ENCODE measurements at regions of chr10 and their contacts with region 1.

Region 1: DNA sequence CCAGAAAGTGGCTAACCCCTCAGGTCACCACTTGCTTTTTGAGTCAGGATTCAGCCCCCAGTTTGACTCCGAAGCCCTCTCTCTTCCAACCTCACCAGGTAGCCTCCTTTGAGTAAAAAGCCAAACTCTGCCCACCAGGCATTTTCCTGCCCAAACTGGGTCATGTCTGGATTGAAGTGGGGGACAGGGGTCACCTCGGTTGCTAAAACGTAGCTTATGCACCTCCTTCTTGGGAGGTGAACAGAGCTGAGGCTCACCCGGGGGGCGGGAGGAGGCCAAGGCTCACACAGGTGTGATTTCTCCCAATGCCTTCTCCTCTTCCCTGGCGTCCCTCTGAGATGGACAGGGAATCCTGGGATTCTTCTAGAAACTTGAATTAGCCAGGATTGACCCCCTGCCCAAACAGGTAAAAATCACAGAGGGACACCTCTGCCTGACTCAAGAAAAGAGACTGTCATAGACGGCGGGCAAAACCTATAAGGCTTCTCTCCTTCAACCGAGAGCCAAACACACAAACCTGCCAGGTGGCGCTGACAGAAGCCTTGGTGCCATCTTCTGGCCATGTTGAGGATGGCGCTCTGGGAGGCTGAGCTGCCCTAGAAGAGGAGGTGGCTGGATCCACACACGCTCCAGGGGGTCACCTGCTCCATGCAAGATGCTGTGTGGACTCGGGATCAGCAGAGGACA is 51.6 kb downstream of the PRLHR start:
- DNase-seq: peak; percentile 58
- H3K4me3 ChIP-seq: no peak overlapping the region
- H3K27ac ChIP-seq: no peak overlapping the region
- H3K4me1 ChIP-seq: peaks cover 4% of the 10 kb centered on the region
- H3K27me3 ChIP-seq: no peaks in the 10 kb centered on the region
- CTCF ChIP-seq: peak; percentile 93 to 97

Region 2: DNA sequence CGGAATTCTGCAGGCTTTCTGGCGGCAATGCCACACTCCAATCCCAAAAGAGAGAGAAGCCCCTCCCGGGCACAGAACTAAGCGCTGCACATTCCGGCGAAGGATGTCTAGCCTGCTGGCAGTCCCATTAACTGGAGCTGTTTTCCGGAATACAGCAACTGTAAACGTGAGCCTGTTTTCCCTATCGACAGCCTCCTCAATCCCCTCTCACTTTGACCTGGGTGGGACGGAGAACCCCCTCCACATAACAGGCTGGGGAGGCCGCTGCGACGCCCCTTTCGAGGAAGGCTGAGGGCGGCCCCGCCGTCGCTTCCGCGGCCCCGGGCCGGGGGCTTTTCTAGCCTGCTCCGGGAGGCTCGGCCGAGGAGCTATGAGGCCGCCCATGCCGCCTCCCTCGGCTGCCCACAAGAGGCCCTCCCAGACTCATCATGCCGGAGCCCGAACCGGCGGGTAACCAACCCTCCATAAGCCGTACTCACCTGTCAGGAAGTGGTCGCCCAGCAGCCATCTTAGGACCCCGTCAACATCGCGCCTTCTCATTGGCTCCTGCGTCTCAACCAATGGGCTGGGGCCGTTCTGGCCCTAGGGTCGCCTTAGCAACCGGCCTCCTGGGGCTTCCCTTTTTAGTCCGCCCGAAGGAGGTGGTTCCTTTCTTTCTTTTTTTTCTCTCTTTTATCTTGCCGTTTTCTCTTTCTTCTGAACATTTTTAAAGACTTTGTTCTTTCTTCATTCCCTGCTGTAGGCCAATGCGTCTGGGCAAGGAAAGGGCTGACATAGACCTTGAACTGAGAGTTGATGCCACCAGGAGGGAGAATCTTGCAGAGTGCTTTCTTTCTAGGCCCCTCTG is 201.8 kb before region 1 on chr10 and contains the start of gene FAM204A:
- CTCF ChIA-PET with region 1: no interaction called
- dilution Hi-C with region 1: no loop called
- in situ Hi-C with region 1: loop called in 1 of 2 experiments (anchors 25 kb)
- intact Hi-C with region 1: loop called (anchors 1 kb)
- DNase-seq: peak; percentile 91
- H3K4me3 ChIP-seq: peak within 1 kb of the TSS; percentile 62 to 87 (median 83)
- H3K27ac ChIP-seq: peak within 1 kb of the TSS; percentile 75
- H3K4me1 ChIP-seq: peaks cover 10% of the 10 kb centered on the region
- H3K27me3 ChIP-seq: no peaks in the 10 kb centered on the region
- CTCF ChIP-seq: no peak
- total RNA-seq, gene FAM204A: 50.3 to 73.2 TPM

Region 3: DNA sequence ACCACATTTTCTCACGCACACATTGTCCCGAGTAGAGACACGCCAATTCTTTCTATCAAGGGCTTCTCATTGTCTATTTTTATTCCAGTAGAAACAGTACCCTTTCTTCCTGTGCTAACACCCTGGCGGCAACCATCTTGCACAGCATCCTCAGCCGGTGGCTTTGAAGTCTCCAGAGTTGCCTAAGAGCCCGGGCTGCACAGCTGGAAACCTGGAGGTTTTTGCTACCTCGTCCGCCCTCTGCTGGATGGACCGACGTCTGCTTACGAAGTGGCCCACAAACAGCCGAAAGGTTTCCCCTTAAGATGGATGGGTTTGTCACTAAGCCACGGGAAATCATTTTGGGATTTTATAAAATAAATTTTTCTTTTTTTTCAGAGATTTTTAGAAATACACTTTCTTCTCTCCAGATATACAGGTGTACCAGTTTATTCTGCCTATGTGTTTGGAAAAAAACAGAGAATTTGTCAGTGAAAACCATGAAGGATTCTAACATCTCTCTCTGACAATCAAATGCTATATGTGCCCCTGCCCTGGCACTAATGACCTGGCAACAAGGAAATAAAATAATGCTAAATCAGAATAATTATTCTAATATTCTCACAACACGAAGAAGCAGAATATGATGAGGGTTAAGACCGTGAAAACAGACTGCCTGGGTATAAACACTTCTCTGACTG is 119.9 kb before region 1 on chr10:
- CTCF ChIA-PET with region 1: no interaction called
- dilution Hi-C with region 1: no loop called
- in situ Hi-C with region 1: no loop called
- intact Hi-C with region 1: loop called (anchors 1 kb)
- DNase-seq: peak; percentile 79
- H3K4me3 ChIP-seq: no peak overlapping the region
- H3K27ac ChIP-seq: no peak overlapping the region
- H3K4me1 ChIP-seq: no peaks in the 10 kb centered on the region
- H3K27me3 ChIP-seq: peaks cover 2% of the 10 kb centered on the region
- CTCF ChIP-seq: peak; percentile 75 to 89

Region 4: GRCh38 chr10:118459726-118460193 is 84.1 kb before region 1 on chr10:
- CTCF ChIA-PET with region 1: no interaction called
- dilution Hi-C with region 1: no loop called
- in situ Hi-C with region 1: loop called in 1 of 2 experiments (anchors 10 kb)
- intact Hi-C with region 1: loop called (anchors 1 kb)
- DNase-seq: peak; percentile 52
- H3K4me3 ChIP-seq: no peak overlapping the region
- H3K27ac ChIP-seq: no peak overlapping the region
- H3K4me1 ChIP-seq: no peaks in the 10 kb centered on the region
- H3K27me3 ChIP-seq: no peaks in the 10 kb centered on the region
- CTCF ChIP-seq: peak; percentile 67 to 84

Region 5: GRCh38 chr10:118471863-118472262 is 72.0 kb before region 1 on chr10:
- CTCF ChIA-PET with region 1: no interaction called
- dilution Hi-C with region 1: no loop called
- in situ Hi-C with region 1: loop called (anchors 5 to 10 kb)
- intact Hi-C with region 1: no loop called
- DNase-seq: peak; percentile 88
- H3K4me3 ChIP-seq: no peak overlapping the region
- H3K27ac ChIP-seq: peak overlapping the region; percentile 92
- H3K4me1 ChIP-seq: peaks cover 25% of the 10 kb centered on the region
- H3K27me3 ChIP-seq: no peaks in the 10 kb centered on the region
- CTCF ChIP-seq: no peak

Region 6: GRCh38 chr10:118504044-118504874 is 39.6 kb before region 1 on chr10:
- CTCF ChIA-PET with region 1: no interaction called
- dilution Hi-C with region 1: no loop called
- in situ Hi-C with region 1: no loop called
- intact Hi-C with region 1: loop called (anchors 1 kb)
- DNase-seq: peak; percentile 91
- H3K4me3 ChIP-seq: no peak overlapping the region
- H3K27ac ChIP-seq: peak overlapping the region; percentile 87
- H3K4me1 ChIP-seq: peaks cover 41% of the 10 kb centered on the region
- H3K27me3 ChIP-seq: no peaks in the 10 kb centered on the region
- CTCF ChIP-seq: no peak

Region 7: GRCh38 chr10:118522791-118523498 is 20.9 kb before region 1 on chr10:
- CTCF ChIA-PET with region 1: no interaction called
- dilution Hi-C with region 1: no loop called
- in situ Hi-C with region 1: no loop called
- intact Hi-C with region 1: loop called (anchors 1 kb)
- DNase-seq: peak; percentile 96
- H3K4me3 ChIP-seq: no peak overlapping the region
- H3K27ac ChIP-seq: peak overlapping the region; percentile 84
- H3K4me1 ChIP-seq: peaks cover 31% of the 10 kb centered on the region
- H3K27me3 ChIP-seq: no peaks in the 10 kb centered on the region
- CTCF ChIP-seq: no peak